Activated naive CD4-positive, alpha-beta T cell treated with anti-CD3 and anti-CD28 coated beads for 36 hours (primary cell): ENCODE measurements at regions of chr4 and their contacts with region 1.

Region 1: GRCh38 chr4:76301068-76301774 is 5.3 kb upstream of the STBD1 start:
- DNase-seq: peak; percentile 60
- H3K4me3 Mint-ChIP-seq: no peak overlapping the region
- H3K27ac Mint-ChIP-seq: no peak overlapping the region
- H3K4me1 Mint-ChIP-seq: peaks cover 23% of the 10 kb centered on the region
- H3K27me3 Mint-ChIP-seq: peaks cover 4% of the 10 kb centered on the region

Region 2: GRCh38 chr4:76198411-76199237 is 102.6 kb before region 1 on chr4:
- CTCF ChIA-PET with region 1: no interaction called
- intact Hi-C with region 1: loop called (anchors 5 kb)
- DNase-seq: peak; percentile 73
- H3K4me3 Mint-ChIP-seq: peak overlapping the region; percentile 8
- H3K27ac Mint-ChIP-seq: no peak overlapping the region
- H3K4me1 Mint-ChIP-seq: peaks cover 34% of the 10 kb centered on the region
- H3K27me3 Mint-ChIP-seq: no peaks in the 10 kb centered on the region

Region 3: GRCh38 chr4:76251441-76252270 is 49.6 kb before region 1 on chr4 and contains the start of gene FAM47E:
- CTCF ChIA-PET with region 1: no interaction called
- intact Hi-C with region 1: loop called (anchors 2 kb)
- DNase-seq: peak; percentile 37
- H3K4me3 Mint-ChIP-seq: peak within 1 kb of the TSS; percentile 65
- H3K27ac Mint-ChIP-seq: no peak within 1 kb of the TSS
- H3K4me1 Mint-ChIP-seq: peaks cover 4% of the 10 kb centered on the region
- H3K27me3 Mint-ChIP-seq: peaks cover 39% of the 10 kb centered on the region
- total RNA-seq, gene FAM47E: not detected

Region 4: GRCh38 chr4:76407440-76408119 is 106.4 kb after region 1 on chr4:
- CTCF ChIA-PET with region 1: no interaction called
- intact Hi-C with region 1: loop called (anchors 1 kb)
- DNase-seq: no peak
- H3K4me3 Mint-ChIP-seq: no peak overlapping the region
- H3K27ac Mint-ChIP-seq: no peak overlapping the region
- H3K4me1 Mint-ChIP-seq: peaks cover 4% of the 10 kb centered on the region
- H3K27me3 Mint-ChIP-seq: peaks cover 7% of the 10 kb centered on the region